Right ventricle myocardium inferior (tissue), 1 donor: ENCODE measurements at regions of chrX and their contacts with region 1.

Region 1: DNA sequence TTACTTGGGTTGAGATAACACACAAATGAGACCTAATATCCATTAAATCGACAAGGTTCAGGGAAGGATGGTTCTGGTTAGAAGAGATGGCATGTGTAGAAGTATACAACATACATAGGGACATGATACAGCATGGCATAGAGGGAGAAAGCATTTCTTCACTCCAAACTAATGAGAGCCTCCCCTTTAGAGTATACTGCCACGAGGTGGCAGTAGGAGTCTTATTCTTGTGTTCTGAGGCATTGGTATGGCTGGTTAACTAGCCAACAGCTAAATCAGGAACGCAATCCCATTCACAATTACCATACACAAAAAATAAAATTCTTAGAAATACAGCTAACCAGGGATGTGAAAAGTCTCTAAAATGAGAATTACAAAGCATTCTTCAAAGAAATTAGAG is 29.1 kb upstream of the TRO start:
- DNase-seq: no peak
- ATAC-seq: no peak

Region 2: DNA sequence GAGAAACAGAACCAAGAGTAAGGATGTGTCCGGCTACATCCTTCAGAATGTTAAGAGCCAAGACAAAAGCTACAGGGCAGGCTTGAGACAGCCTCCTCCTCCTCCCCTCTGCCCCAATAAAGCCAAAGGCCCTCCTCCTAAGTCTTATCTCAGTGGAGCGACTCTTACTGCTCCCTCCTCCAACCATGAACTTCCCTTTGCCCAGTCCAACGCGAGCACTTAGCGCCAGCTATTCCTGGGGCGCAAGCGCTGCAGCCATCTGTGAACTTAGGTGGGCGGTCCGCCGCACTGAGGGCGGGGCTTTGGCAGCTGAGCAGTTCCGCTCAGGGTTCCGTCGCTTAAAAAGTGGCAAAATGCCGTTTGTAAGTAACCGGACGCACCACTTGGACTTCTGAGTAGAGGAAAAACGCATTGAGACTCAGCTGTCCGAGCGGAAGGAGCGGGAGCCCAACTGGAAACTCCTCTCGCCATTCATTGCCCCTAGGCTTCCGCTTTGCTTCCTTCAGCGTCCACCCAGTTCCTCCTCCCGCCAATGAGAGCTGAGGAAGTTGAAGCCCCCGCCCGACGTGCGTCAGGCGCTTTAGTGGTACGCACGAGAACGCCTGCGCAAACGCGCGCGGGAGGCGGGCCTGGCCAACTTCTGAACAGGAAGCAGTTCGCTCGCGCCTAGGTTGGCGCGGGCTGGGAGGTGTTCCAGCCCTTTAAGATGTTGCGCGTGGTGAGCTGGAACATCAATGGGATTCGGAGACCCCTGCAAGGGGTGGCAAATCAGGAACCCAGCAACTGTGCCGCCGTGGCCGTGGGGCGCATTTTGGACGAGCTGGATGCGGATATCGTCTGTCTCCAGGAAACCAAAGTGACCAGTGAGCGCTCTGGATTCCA is 108.4 kb after region 1 on chrX and contains the start of gene APEX2:
- intact Hi-C with region 1: loop called (anchors 10 kb)
- DNase-seq: peak; percentile 97
- ATAC-seq: peak; percentile 97
- total RNA-seq, gene APEX2: 8.3 TPM

Region 3: DNA sequence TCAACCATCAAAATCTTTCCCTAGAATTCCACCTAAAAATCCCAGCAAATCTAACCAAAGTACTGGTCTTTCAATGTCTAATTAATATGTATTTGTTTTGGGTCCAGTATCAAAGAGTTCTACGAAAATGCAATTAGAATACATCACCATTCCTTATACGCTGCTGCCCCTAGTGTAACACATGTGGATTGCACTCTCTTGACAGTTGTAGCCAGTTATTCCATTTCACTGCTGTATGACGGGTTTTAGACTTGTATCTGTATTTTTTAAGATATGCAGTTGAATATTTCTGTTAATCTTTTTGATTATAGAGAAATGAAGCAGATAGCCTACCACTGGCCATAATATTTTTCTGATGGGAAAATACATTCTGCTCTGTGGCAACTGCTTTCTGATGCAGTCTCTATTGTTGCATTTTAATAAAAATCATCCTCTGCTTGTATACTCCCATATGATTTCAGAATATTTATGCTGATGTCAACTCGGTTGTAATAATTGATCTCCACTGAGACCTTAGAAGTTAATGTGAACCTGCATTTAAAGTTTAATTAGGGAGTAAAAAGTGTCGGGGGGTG is 166.2 kb after region 1 on chrX:
- intact Hi-C with region 1: loop called (anchors 2 kb)
- DNase-seq: no peak
- ATAC-seq: no peak